Left cardiac atrium (tissue), 4 donors: ENCODE measurements at regions of chr5 and their contacts with region 1.

Region 1: DNA sequence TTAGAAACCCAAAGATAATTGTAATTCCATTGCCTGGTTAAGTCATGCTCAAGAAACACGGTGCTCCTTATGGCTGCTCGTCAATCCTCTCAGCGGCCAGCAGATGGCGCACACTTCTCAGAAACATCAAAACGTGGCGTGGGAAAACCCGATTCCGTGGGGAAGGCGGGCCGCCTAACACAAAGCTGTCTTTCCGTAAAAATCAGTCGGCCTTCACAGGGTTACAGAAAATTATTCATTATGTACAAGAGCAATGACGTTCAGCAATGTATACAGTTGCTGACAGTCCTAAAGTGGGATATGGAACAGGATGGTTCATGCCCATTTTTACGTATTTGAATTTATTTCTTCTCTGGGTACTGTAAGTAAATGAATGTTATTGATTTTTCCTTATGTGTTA is 83.5 kb downstream of the PDE4D start:
- DNase-seq: peak; percentile 71
- ATAC-seq: peak; percentile 67 to 74

Region 2: GRCh38 chr5:60586307-60586901 is 776.4 kb after region 1 on chr5:
- intact Hi-C with region 1: loop called in 1 of 2 experiments (anchors 5 kb)
- DNase-seq: no peak
- ATAC-seq: no peak

Region 3: GRCh38 chr5:60668686-60669304 is 858.8 kb after region 1 on chr5:
- intact Hi-C with region 1: loop called (anchors 5 kb)
- DNase-seq: no peak
- ATAC-seq: no peak